H1 (cell line): ENCODE measurements at regions of chr20 and their contacts with region 1.

Region 1: DNA sequence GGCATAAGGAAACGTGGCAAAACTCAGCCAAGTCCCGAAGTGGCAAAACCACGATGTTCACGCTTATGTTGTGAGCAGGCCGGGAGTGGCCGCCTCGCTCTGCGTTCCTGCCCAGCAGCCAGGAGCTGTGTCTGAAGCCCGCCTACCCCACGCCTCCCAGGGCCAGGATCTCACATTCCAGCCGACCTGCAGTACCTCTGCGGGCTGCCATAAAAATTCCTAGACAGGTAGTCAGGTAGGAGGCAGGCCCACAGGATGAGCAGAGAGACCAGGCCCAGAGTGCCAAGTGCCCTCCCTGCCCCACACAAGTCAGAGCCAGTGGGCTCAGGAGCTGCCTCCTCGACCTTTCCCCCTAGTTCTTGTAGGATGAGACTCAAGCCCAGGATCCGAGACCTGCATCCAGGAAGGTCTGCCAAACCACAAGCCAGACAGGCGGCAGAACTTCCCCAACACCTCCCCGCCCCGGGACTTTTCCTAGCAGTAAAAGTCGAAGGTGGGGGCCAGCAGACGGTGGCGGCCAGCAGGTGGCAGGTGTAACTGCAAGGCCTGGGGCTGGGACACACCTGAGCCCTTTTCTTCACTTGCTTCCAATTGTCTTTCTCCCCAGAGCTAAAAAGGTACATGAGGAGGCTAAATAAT is 16.7 kb downstream of the PMEPA1 start:
- DNase-seq: peak in 1 of 2 experiments; percentile 68
- H3K4me3 ChIP-seq: no peak overlapping the region
- H3K27ac ChIP-seq: no peak overlapping the region
- H3K4me1 ChIP-seq: peaks cover 0 to 15% (median 9%) of the 10 kb centered on the region in 4 experiments; a peak in 5 of 7 replicates
- H3K27me3 ChIP-seq: no peaks in the 10 kb centered on the region
- CTCF ChIP-seq: peak; percentile 42 to 59 (median 42)
- EP300 ChIP-seq: no peak
- POLR2A ChIP-seq: no peak
- RAD21 ChIP-seq: peak; percentile 39 to 58; a peak in 3 of 4 replicates

Region 2: DNA sequence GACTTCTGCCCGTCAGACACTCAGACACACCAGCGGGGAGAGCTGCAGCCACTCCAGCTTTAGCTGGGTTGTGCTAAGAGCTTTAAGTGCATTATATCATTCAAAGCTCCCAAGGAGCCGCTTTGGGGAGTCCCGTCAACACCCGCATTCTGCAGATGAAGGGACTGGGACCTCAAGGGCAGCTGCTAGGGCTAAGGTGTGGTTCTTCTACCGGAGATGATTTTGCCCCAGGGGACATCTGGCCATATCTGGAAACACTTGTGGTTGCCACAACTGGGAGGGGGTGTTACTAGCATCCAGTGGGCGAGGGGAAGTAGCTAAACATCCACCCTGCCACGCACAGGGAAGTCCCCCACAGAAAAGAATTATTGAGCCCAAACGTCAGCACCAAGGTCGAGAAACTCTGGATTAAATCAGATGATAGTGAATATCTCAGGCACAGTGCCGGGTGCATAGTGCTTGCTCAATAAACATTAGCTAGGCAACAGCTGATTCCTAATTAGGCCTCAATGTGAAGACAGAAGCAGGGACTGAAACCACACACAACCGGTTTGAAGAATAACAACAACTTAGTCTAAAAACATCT is 12.9 kb before region 1 on chr20:
- CTCF ChIA-PET with region 1: interaction called, 20 read pairs
- POLR2A ChIA-PET with region 1: interaction called, 8 read pairs
- DNase-seq: no peak
- H3K4me3 ChIP-seq: no peak overlapping the region
- H3K27ac ChIP-seq: no peak overlapping the region
- H3K4me1 ChIP-seq: peaks cover 17 to 54% (median 23%) of the 10 kb centered on the region in 4 experiments
- H3K27me3 ChIP-seq: no peaks in the 10 kb centered on the region
- CTCF ChIP-seq: no peak
- EP300 ChIP-seq: no peak
- POLR2A ChIP-seq: no peak
- RAD21 ChIP-seq: no peak

Region 3: GRCh38 chr20:57709931-57710799 is 17.0 kb after region 1 on chr20 and contains the start of gene PMEPA1:
- CTCF ChIA-PET with region 1: interaction called, 8 read pairs
- POLR2A ChIA-PET with region 1: interaction called, 59 read pairs
- DNase-seq: peak; percentile 84 to 94
- H3K4me3 ChIP-seq: peak within 1 kb of the TSS; percentile 80 to 83 (median 82)
- H3K27ac ChIP-seq: peak within 1 kb of the TSS; percentile 61
- H3K4me1 ChIP-seq: peaks cover 0 to 24% (median 13%) of the 10 kb centered on the region in 4 experiments; a peak in 5 of 7 replicates
- H3K27me3 ChIP-seq: peaks cover 0 to 18% (median 10%) of the 10 kb centered on the region in 4 experiments; a peak in 5 of 7 replicates
- CTCF ChIP-seq: no peak
- EP300 ChIP-seq: peak in 1 of 2 experiments; percentile 95; a peak in 2 of 3 replicates
- POLR2A ChIP-seq: peak in 1 of 2 experiments; percentile 50; a peak in 1 of 3 replicates
- RAD21 ChIP-seq: no peak
- total RNA-seq, gene PMEPA1: 20.0 and 20.5 TPM in 2 replicates

Region 4: GRCh38 chr20:57788001-57788781 is 95.1 kb after region 1 on chr20:
- CTCF ChIA-PET with region 1: no interaction called
- POLR2A ChIA-PET with region 1: no interaction called
- DNase-seq: no peak
- H3K4me3 ChIP-seq: no peak overlapping the region
- H3K27ac ChIP-seq: no peak overlapping the region
- H3K4me1 ChIP-seq: no peaks in the 10 kb centered on the region; a peak in 1 of 7 replicates
- H3K27me3 ChIP-seq: no peaks in the 10 kb centered on the region
- CTCF ChIP-seq: no peak
- EP300 ChIP-seq: no peak
- POLR2A ChIP-seq: no peak
- RAD21 ChIP-seq: no peak

Region 5: GRCh38 chr20:57856658-57857057 is 163.5 kb after region 1 on chr20:
- CTCF ChIA-PET with region 1: no interaction called
- POLR2A ChIA-PET with region 1: no interaction called
- DNase-seq: no peak
- H3K4me3 ChIP-seq: no peak overlapping the region
- H3K27ac ChIP-seq: no peak overlapping the region
- H3K4me1 ChIP-seq: no peaks in the 10 kb centered on the region
- H3K27me3 ChIP-seq: peaks cover 0 to 1% (median 0%) of the 10 kb centered on the region in 4 experiments; a peak in 3 of 7 replicates
- CTCF ChIP-seq: no peak
- EP300 ChIP-seq: no peak
- POLR2A ChIP-seq: no peak
- RAD21 ChIP-seq: no peak